Common myeloid progenitor, CD34-positive (primary cell): ENCODE measurements at regions of chr14 and their contacts with region 1.

Region 1: GRCh38 chr14:25381464-25381863 is 331.5 kb upstream of the STXBP6 start:
- DNase-seq: peak; percentile 18 to 80 (median 68)
- H3K4me3 ChIP-seq: no peak overlapping the region
- H3K27ac ChIP-seq: no peak overlapping the region
- H3K4me1 ChIP-seq: no peaks in the 10 kb centered on the region
- H3K27me3 ChIP-seq: peaks cover 0 to 7% (median 0%) of the 10 kb centered on the region in 5 experiments

Region 2: GRCh38 chr14:25308244-25308643 is 73.2 kb before region 1 on chr14:
- CTCF ChIA-PET with region 1: no interaction called
- POLR2A ChIA-PET with region 1: no interaction called
- DNase-seq: no peak
- H3K4me3 ChIP-seq: no peak overlapping the region
- H3K27ac ChIP-seq: no peak overlapping the region
- H3K4me1 ChIP-seq: no peaks in the 10 kb centered on the region
- H3K27me3 ChIP-seq: peaks cover 0 to 2% (median 0%) of the 10 kb centered on the region in 5 experiments

Region 3: GRCh38 chr14:25349269-25349668 is 32.2 kb before region 1 on chr14:
- CTCF ChIA-PET with region 1: no interaction called
- POLR2A ChIA-PET with region 1: no interaction called
- DNase-seq: no peak
- H3K4me3 ChIP-seq: no peak overlapping the region
- H3K27ac ChIP-seq: no peak overlapping the region
- H3K4me1 ChIP-seq: no peaks in the 10 kb centered on the region
- H3K27me3 ChIP-seq: no peaks in the 10 kb centered on the region

Region 4: DNA sequence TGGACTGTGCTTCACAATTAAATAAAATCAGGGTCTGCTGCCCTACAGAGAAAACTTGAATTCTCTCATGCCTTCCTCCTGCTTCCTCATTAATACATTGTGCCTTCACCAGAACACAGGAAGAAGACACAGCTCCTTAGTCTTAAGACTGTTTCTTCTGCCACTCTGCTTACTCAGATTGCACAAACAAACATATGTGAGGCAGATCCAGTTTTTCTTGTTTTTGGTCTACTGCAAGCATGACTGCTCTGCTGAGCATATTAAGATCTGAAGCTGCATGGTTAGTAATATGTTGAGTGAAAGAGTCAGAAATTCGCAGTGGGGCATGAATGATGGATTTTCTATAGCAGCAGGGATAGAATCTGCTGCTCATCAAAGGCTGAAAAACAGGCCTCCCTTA is 10.4 kb before region 1 on chr14:
- CTCF ChIA-PET with region 1: no interaction called
- POLR2A ChIA-PET with region 1: no interaction called
- DNase-seq: no peak
- H3K4me3 ChIP-seq: no peak overlapping the region
- H3K27ac ChIP-seq: no peak overlapping the region
- H3K4me1 ChIP-seq: no peaks in the 10 kb centered on the region
- H3K27me3 ChIP-seq: no peaks in the 10 kb centered on the region

Region 5: DNA sequence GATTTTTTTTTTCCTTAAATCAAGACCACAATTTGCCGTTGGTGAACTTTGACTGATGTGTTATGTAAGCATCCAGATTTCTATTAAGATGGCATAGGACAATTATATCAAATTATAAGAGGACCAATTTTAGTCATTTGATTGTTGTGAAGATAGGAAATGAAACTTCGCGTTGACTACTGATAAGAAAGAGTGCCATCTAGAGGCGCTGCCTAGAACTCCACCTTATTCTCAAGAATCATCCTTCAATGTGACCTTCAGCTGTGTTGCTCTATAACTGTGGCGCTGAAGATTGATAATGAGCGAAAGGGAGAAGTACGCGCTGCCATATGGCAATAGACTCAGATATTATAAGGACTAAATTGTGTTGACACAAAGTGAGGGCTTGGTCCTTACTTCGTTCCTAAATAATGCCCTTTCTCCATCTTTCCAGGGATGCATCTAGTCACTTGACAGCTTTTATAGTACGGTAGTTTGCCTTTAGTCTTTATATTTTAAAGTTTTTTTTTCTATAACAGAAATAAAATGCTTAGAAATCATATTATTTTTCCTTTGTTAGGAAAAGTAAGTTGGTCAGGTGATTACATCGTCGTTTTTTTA is 19.2 kb after region 1 on chr14:
- CTCF ChIA-PET with region 1: interaction called, 43 read pairs
- POLR2A ChIA-PET with region 1: no interaction called
- DNase-seq: peak; percentile 34 to 67 (median 66)
- H3K4me3 ChIP-seq: no peak overlapping the region
- H3K27ac ChIP-seq: no peak overlapping the region
- H3K4me1 ChIP-seq: peaks cover 0 to 7% (median 3%) of the 10 kb centered on the region in 4 experiments
- H3K27me3 ChIP-seq: peaks cover 0 to 5% (median 0%) of the 10 kb centered on the region in 5 experiments

Region 6: GRCh38 chr14:25406818-25407217 is 25.4 kb after region 1 on chr14:
- CTCF ChIA-PET with region 1: interaction called, 43 read pairs
- POLR2A ChIA-PET with region 1: no interaction called
- DNase-seq: peak; percentile 43 to 75 (median 70)
- H3K4me3 ChIP-seq: no peak overlapping the region
- H3K27ac ChIP-seq: no peak overlapping the region
- H3K4me1 ChIP-seq: no peaks in the 10 kb centered on the region
- H3K27me3 ChIP-seq: no peaks in the 10 kb centered on the region